ENCODE measurements at regions of chr16 and their contacts with region 1.

Region 1: DNA sequence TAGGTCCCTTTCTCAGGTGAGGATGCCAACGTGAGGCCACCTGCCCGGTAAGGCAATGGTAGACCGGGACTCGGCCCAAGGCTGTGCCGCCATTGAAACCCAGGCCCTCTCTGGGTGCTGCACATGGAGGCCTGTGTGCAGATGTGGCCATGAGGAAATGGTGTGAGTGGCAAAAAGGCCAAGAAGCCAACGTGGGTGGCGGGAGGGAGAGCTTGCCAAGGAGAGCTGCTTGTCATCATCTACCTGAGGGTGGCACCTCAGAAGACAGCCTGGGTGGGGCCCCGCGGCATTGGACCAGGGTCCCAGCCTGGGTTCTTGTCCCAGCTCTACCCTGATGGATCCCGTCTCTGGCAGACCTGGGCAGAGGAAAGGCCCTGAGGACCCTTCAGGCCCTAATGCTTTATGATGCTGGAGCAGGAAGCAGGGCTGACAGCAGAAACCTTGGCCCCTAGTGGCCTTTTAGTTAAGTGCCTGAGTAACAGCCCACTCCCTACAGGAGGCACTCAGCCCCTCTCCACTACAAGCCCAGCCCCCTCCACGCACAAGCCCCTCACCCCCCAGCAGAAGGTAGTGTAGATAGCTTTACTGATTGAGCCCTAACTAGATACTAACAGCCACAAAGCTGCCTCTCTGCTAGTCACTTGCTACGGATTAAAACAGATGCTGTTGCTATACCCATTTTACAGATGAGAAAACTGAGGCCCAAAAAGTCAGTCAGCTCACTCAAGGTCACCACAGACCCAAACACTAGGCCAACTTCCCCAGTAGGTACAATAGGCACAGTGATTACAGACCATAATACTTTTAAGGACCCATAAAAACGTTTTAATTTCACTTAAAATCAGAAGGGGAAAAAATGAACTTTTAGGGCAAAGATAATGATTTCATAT is 26.2 kb upstream of the KIFC3 start:
- DNase-seq: no peak
- H3K4me3 ChIP-seq: no peak overlapping the region
- H3K27ac ChIP-seq: no peak overlapping the region
- H3K4me1 ChIP-seq: peaks cover 4 to 7% of the 10 kb centered on the region in 2 donors
- H3K27me3 ChIP-seq: no peaks in the 10 kb centered on the region
- CTCF ChIP-seq: no peak

Region 2: DNA sequence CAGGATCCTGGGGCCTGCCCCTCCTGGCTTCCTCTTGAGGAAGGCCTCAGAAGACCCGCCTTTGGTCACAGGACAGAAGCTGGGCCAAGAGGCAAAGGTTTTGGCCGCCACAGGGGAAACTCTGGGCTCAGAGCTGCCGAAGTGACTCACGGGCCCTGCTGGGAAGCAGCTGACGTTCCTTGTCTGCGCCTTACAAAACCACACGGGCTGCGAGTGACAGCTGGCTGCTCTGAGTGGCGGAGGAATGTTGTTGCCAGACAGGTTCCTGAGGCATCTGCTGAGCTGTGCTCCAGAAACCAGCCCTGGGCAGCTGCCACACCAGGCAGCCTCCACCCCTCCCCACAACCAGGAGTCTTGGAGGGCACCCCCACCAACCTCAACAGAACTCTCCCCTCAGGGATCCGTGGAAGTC is 12.2 kb before region 1 on chr16:
- intact Hi-C with region 1: loop called (anchors 1 kb)
- DNase-seq: peak; percentile 86 to 97
- H3K4me3 ChIP-seq: no peak overlapping the region
- H3K27ac ChIP-seq: peak overlapping the region; percentile 87 to 92
- H3K4me1 ChIP-seq: peaks cover 4 to 16% of the 10 kb centered on the region in 2 donors
- H3K27me3 ChIP-seq: no peaks in the 10 kb centered on the region
- CTCF ChIP-seq: no peak